ENCODE measurements at regions of chr15 and their contacts with region 1.

Region 1: DNA sequence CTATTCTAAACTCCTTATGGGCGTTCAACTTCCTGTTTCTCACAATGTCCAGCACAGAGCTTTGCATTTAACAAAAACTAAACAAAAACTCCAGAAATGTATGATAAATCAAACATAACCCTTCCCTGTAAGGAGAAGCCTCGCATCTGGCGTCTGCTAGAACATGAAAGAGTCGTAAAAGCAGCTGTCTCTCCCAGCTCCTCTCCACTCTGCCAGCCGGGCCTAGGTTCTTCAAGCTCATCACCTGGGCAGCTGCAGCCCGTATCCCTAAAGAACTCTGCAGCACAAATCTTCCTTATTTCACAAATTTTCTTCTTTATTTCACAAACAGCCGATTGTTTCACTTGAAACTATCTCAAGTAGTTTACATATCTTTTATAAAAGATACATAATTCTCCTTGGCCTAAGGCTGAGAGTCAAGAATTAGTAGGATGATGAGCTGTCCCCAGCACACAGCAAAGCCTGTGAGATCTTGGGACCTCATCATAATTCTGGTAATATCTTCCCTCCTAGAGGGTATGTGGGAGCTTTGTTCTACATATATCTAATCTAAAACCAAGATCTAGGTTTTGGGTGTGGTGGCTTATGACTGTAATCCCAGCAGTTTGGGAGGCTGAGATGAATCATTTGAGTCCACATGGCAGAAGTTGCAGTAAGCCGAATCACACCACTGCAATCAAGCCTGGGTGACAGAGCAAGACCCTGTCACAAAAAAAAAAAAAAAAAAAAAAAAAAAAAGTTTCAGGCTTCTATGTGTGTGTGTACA is 35.3 kb downstream of the ANXA2 start:
- DNase-seq: no peak
- ATAC-seq: peak; percentile 77
- H3K4me3 ChIP-seq: no peak overlapping the region
- H3K4me1 ChIP-seq: peaks cover 11% of the 10 kb centered on the region
- CTCF ChIP-seq: no peak

Region 2: GRCh38 chr15:60251229-60251628 is 111.3 kb before region 1 on chr15:
- intact Hi-C with region 1: no loop called
- DNase-seq: no peak
- ATAC-seq: no peak
- H3K4me3 ChIP-seq: no peak overlapping the region
- H3K4me1 ChIP-seq: no peaks in the 10 kb centered on the region
- CTCF ChIP-seq: no peak

Region 3: DNA sequence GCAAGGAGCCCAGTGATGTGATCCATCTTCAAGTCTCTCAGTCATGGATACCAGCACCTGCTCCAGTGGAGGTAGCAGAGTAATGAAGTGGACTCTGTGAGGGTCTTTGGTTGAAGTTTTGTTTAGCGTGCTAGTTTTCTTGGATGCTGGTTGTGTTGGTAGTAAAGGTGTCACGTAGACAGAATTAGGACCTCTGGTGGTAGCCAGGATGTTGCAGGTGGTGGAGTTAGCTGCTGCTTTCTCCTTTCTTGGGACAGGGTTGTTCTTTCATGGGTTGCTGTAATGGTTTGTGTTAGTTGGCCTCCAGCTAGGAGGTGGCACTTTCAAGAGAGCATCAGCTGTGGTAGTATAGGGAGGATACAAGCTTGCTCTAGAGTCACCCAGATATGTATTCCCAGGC is 89.9 kb before region 1 on chr15:
- intact Hi-C with region 1: no loop called
- DNase-seq: no peak
- ATAC-seq: no peak
- H3K4me3 ChIP-seq: no peak overlapping the region
- H3K4me1 ChIP-seq: no peaks in the 10 kb centered on the region
- CTCF ChIP-seq: no peak

Region 4: DNA sequence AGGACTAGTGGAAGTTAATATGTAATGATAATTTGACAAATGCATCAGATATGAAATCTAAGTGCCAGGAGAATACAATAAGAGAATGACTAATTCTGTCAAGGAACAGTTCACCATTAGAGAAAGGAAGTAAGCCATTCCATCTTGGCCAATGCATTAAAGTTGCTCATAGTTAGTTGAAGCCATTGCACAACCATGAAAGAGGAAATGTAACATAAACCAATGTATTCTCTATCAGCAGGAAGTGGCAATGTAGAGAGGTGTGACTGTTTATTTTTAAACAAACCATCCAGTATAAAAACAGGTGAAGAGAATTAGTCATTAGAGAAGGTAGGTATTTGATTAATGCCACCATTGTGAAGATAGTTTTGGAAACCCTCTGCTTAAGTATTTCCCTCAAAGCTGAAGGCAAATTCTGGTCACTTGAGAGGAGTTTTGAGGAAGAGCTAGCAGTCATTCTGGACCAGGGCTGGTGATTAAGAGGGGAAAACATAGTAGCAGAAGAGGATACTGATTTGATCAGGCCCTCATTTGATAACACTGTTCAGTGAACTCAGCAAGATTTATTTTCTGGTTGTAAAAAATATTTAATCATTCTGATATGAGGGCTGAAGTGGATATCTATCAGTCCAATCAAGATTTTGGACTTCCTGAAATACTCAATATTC is 46.1 kb after region 1 on chr15:
- intact Hi-C with region 1: no loop called
- DNase-seq: no peak
- ATAC-seq: peak; percentile 98
- H3K4me3 ChIP-seq: no peak overlapping the region
- H3K4me1 ChIP-seq: peaks cover 15% of the 10 kb centered on the region
- CTCF ChIP-seq: no peak

Region 5: DNA sequence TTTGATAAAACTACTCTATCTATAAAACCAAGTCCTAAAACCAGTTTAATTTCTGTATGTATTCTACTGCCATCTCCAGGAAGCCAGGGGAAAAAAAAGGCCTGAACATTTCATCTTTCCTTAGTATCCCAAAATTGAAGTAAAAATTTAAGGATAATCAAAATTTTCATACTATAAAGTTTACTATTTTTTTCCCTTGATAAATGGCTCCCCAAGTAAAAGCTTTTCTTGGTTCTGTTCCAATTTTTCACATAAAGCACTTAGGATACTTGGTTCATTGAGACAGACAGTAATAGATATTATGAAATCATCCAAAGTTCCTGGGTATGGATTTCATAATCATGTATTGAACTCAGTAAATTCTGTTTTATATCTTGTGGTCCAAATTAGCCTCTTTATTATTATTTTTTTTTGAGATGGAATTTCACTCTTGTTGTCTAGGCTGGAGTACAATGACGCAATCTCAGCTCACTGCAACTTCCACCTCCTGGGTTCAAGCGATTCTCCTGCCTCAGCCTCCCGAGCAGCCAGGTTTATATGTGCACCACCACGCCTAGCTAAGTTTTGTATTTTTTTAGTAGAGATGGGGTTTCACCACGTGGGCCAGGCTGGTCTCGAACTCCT is 81.9 kb after region 1 on chr15:
- intact Hi-C with region 1: loop called in 1 of 2 experiments (anchors 5 kb)
- DNase-seq: no peak
- ATAC-seq: no peak
- H3K4me3 ChIP-seq: no peak overlapping the region
- H3K4me1 ChIP-seq: peaks cover 3% of the 10 kb centered on the region
- CTCF ChIP-seq: no peak